Right ventricle myocardium inferior (tissue), 1 donor: ENCODE measurements at regions of chr3 and their contacts with region 1.

Region 1: DNA sequence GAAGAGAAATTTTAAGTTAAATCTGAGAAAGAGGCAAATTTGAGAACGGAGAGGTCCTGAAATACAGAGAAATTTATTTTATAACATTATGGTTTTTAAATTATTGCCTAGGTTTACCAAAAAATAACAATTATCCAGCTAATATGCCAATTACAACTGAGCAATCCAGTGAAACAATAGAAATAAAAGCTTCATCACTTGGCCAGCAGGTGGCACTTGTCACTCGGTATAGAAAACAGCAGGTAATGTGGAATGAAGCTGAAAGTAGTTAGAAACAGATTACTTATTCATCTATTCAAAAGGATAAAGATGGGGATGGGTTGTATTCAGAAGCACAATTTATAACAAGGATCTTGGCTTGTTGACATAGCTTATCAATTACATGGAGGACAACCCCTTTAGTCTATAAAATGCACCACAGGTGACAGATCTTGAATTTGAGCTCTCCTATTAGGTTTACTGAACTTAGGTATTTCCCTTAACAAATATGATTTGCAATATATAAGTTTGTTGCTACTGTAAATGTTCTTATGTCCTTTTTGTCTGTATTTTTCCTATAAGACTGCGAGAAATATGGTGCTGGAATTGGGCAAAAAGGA is 70.1 kb upstream of the GUCA1C start:
- DNase-seq: no peak
- ATAC-seq: no peak

Region 2: GRCh38 chr3:108477511-108478147 is 546.1 kb before region 1 on chr3:
- intact Hi-C with region 1: no loop called
- DNase-seq: no peak
- ATAC-seq: no peak

Region 3: DNA sequence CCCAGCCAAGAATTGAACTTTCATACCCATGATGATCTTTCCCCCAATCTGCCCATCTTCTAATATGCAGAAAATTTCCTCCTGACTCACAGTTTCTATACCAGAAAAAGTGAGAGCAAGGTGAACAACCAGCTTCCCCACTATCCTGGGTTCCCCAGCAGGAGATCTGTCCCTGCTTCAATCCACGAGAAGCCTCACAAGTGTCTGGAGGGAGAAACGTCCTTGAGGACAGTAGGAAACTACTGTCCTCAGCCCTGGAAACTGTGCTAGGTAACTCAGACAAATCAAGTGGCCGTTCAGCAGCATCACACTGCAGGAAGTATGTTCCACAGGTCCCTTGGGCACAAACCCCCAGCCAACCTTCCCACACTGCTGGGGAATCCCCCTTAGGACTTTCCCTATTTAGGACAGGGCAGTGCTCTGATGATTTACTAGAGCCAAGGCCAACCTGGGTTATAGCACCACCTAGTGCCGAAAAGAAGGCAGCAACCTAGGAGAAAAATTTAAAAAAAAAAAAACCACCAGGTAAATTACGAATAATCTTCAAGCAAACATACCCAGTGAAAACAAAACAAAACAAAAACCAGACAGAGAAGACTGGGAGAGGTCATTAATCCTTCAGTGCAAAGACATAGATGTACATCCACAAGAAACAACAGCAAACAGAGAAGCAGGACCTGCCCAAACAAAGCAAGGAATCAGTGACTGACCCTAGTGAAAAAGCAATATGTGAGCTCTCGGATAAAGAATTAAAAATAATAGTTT is 58.2 kb after region 1 on chr3:
- intact Hi-C with region 1: loop called (anchors 1 kb)
- DNase-seq: no peak
- ATAC-seq: no peak